Breast epithelium (tissue), 4 donors: ENCODE measurements at regions of chr4 and their contacts with region 1.

Region 1: DNA sequence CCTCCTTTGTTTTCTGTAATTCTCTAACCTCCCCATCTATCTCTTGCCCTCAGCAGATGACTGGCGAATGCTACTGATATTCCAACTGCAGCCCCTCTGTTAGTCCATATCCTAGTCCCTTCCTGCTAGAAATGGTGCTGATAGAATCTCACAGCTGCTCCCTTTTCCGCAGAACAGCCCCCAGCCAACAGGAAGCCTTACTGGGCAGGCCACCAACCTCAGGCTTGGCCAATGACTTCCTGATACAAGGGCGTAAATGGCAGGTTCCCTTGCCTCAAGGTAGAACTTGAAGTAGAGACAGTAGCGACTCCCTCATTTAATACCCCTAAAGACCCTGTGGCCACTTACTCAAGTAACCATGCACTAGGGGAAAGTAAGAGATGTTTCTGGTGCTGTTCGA is 26.7 kb upstream of the SLC2A9 start:
- DNase-seq: no peak
- H3K4me3 ChIP-seq: no peak overlapping the region
- H3K27ac ChIP-seq: no peak overlapping the region
- H3K4me1 ChIP-seq: no peaks in the 10 kb centered on the region
- H3K27me3 ChIP-seq: no peaks in the 10 kb centered on the region
- CTCF ChIP-seq: no peak
- POLR2A ChIP-seq: no peak

Region 2: GRCh38 chr4:10074767-10075105 is 26.8 kb after region 1 on chr4:
- intact Hi-C with region 1: no loop called
- DNase-seq: peak in 1 of 2 donors; percentile 22
- H3K4me3 ChIP-seq: no peak overlapping the region
- H3K27ac ChIP-seq: no peak overlapping the region
- H3K4me1 ChIP-seq: no peaks in the 10 kb centered on the region
- H3K27me3 ChIP-seq: no peaks in the 10 kb centered on the region
- CTCF ChIP-seq: no peak
- POLR2A ChIP-seq: no peak

Region 3: DNA sequence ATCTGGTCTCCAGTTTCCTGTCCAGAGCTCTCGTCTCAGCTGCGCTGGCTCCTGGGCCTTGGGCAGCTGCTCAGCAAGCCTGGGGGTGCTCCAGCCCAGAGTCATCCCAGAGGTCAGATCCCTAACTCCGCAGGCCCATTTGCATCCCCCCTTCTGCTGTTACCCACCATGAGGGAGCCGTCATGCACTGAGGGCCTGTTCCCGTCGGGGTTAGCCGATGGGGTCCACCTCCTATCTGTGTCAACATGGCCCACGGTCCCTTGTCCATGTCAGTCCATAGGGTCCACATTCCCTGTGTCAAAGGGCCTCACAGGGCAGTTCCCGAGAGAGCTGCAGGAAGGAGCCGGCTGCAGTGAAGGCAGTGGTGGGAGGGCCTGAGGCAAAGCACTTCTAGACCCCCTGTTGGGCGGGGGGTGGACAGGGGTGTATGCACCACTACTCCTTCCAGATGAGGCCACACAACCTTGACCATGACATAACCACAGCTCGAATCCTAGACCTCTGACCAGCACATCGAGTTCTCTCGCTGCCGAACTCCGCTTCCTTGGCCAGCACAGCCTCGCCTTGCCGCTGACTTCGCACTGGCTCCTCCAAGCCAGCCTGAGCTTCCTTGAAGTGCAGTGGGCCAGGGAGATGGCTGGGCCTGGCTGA is 43.7 kb after region 1 on chr4:
- intact Hi-C with region 1: loop called (anchors 2 kb)
- DNase-seq: no peak
- H3K4me3 ChIP-seq: no peak overlapping the region
- H3K27ac ChIP-seq: no peak overlapping the region
- H3K4me1 ChIP-seq: peaks cover 12 to 20% of the 10 kb centered on the region in 2 donors
- H3K27me3 ChIP-seq: no peaks in the 10 kb centered on the region
- CTCF ChIP-seq: no peak
- POLR2A ChIP-seq: no peak